ENCODE measurements at regions of chr10 and their contacts with region 1.

Region 1: DNA sequence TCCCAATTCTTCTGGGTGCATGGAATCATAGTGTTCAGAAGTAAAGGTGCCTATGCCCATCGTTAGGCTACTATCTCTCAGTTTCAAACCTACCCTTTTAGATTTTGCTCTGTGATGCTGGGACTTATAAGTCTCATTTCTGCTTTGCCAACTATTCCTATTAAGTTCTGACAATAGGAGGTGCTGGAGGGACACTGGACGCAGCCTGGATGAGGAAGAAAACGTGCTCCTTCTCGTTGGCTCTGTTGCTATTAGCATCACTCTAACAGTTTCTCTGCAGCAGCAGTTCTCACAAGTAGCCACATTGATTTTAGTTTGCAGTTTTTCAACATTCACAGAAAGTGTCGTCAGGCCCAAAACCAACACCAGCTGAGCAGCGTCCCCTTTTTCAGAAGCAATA is 72.4 kb downstream of the ABCC2 start:
- ATAC-seq: peak in 5 of 8 experiments; percentile 35 to 84 (median 76)
- H3K4me3 ChIP-seq: no peak overlapping the region
- H3K27ac ChIP-seq: no peak overlapping the region
- H3K4me1 ChIP-seq: peaks cover 1 to 3% of the 10 kb centered on the region in 2 donors

Region 2: GRCh38 chr10:100046021-100046486 is 191.2 kb after region 1 on chr10:
- in situ Hi-C with region 1: loop called in 1 of 9 experiments (anchors 25 kb)
- ATAC-seq: peak; percentile 58 to 93 (median 81)
- H3K4me3 ChIP-seq: no peak overlapping the region
- H3K27ac ChIP-seq: no peak overlapping the region
- H3K4me1 ChIP-seq: no peaks in the 10 kb centered on the region

Measured in motor neuron (in vitro differentiated cells).